Heart left ventricle (tissue), 16 donors: ENCODE measurements at regions of chr18 and their contacts with region 1.

Region 1: GRCh38 chr18:36470896-36471295 is 173.4 kb downstream of the FHOD3 start:
- DNase-seq: no peak
- ATAC-seq: no peak
- H3K4me3 ChIP-seq: no peak overlapping the region
- H3K27ac ChIP-seq: peak overlapping the region in 10 of 12 donors; percentile 6 to 97 (median 84)
- H3K4me1 ChIP-seq: peaks cover 0 to 69% (median 27%) of the 10 kb centered on the region in 12 donors
- H3K27me3 ChIP-seq: no peaks in the 10 kb centered on the region
- CTCF ChIP-seq: no peak
- POLR2A ChIP-seq: no peak

Region 2: DNA sequence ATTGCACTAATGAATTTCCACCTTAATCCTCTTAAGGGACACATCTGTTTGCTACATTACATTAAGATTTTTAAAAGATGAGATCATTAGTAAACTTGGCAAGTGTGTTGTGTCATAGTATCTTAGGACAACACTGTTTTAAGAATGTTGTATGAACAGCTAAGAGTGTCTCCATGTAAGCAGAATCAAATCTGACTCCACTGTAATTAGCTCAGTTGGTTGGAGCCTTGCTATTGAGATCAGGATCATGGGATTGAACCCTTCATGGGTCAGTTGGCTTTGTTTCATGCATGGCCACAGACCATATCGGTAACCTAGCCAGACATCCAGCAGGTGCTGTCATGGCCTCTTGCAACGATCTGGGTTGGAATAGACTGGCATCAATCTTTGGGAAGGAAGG is 168.2 kb before region 1 on chr18:
- intact Hi-C with region 1: loop called in 5 of 10 experiments (anchors 5 to 10 kb)
- DNase-seq: no peak
- ATAC-seq: no peak
- H3K4me3 ChIP-seq: no peak overlapping the region
- H3K27ac ChIP-seq: peak overlapping the region in 6 of 12 donors; percentile 15 to 65 (median 44)
- H3K4me1 ChIP-seq: peaks cover 0 to 62% (median 20%) of the 10 kb centered on the region in 12 donors
- H3K27me3 ChIP-seq: peaks cover 0 to 43% (median 9%) of the 10 kb centered on the region in 9 donors
- CTCF ChIP-seq: no peak
- POLR2A ChIP-seq: no peak

Region 3: GRCh38 chr18:36349552-36349951 is 121.3 kb before region 1 on chr18:
- intact Hi-C with region 1: no loop called
- DNase-seq: no peak
- ATAC-seq: peak in 1 of 4 donors; percentile 13
- H3K4me3 ChIP-seq: no peak overlapping the region
- H3K27ac ChIP-seq: peak overlapping the region in 6 of 12 donors; percentile 1 to 69 (median 40)
- H3K4me1 ChIP-seq: peaks cover 0 to 52% (median 19%) of the 10 kb centered on the region in 12 donors
- H3K27me3 ChIP-seq: no peaks in the 10 kb centered on the region
- CTCF ChIP-seq: no peak
- POLR2A ChIP-seq: no peak

Region 4: GRCh38 chr18:36543991-36544725 is 73.3 kb after region 1 on chr18:
- intact Hi-C with region 1: loop called in 1 of 10 experiments (anchors 10 kb)
- DNase-seq: peak in 3 of 5 donors; percentile 40 to 71 (median 60)
- ATAC-seq: peak; percentile 48 to 77 (median 64)
- H3K4me3 ChIP-seq: no peak overlapping the region
- H3K27ac ChIP-seq: peak overlapping the region in 8 of 12 donors; percentile 2 to 56 (median 36)
- H3K4me1 ChIP-seq: peaks cover 0 to 39% (median 11%) of the 10 kb centered on the region in 12 donors
- H3K27me3 ChIP-seq: no peaks in the 10 kb centered on the region
- CTCF ChIP-seq: no peak
- POLR2A ChIP-seq: no peak

Region 5: GRCh38 chr18:36558234-36558633 is 87.3 kb after region 1 on chr18:
- intact Hi-C with region 1: loop called in 4 of 10 experiments (anchors 5 to 10 kb)
- DNase-seq: no peak
- ATAC-seq: no peak
- H3K4me3 ChIP-seq: no peak overlapping the region
- H3K27ac ChIP-seq: no peak overlapping the region
- H3K4me1 ChIP-seq: peaks cover 0 to 27% (median 11%) of the 10 kb centered on the region in 12 donors
- H3K27me3 ChIP-seq: no peaks in the 10 kb centered on the region
- CTCF ChIP-seq: no peak
- POLR2A ChIP-seq: no peak

Region 6: GRCh38 chr18:36724591-36725001 is 253.7 kb after region 1 on chr18:
- intact Hi-C with region 1: no loop called
- DNase-seq: peak in 1 of 5 donors; percentile 42
- ATAC-seq: peak in 2 of 4 donors; percentile 18 to 23
- H3K4me3 ChIP-seq: peak overlapping the region in 3 of 12 donors; percentile 19 to 29 (median 27)
- H3K27ac ChIP-seq: peak overlapping the region in 3 of 12 donors; percentile 24 to 39 (median 26)
- H3K4me1 ChIP-seq: peaks cover 0 to 32% (median 6%) of the 10 kb centered on the region in 12 donors
- H3K27me3 ChIP-seq: no peaks in the 10 kb centered on the region
- CTCF ChIP-seq: no peak
- POLR2A ChIP-seq: no peak